ENCODE measurements at regions of chr3 and their contacts with region 1.

Region 1: DNA sequence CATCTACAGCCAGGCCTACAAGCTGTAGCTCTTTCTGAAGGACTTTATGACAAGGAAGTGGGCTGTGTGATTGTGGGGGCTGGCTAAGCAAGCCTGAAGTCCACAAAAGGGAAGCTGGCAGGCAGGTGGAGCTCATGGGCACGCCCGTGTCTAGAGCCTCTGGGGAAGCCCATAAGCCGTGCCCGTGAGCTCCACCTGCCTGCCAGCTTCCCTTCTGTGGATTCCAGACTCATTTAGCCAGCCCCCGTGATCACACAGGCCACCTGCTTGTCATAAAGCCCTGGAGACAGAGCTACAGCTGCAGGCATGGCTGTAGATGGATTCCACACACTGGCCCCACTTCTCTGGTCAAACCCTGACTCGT is 15.2 kb downstream of the EFCC1 start:
- DNase-seq: peak; percentile 88
- H3K4me3 Mint-ChIP-seq: peak overlapping the region; percentile 73
- H3K27ac Mint-ChIP-seq: peak overlapping the region; percentile 95
- H3K4me1 Mint-ChIP-seq: peaks cover 38% of the 10 kb centered on the region
- H3K27me3 Mint-ChIP-seq: no peaks in the 10 kb centered on the region

Region 2: GRCh38 chr3:128650096-128651050 is 366.0 kb before region 1 on chr3 and contains the start of gene RPN1:
- CTCF ChIA-PET with region 1: no interaction called
- intact Hi-C with region 1: loop called (anchors 5 kb)
- DNase-seq: peak; percentile 97
- H3K4me3 Mint-ChIP-seq: peak within 1 kb of the TSS; percentile 83
- H3K27ac Mint-ChIP-seq: peak within 1 kb of the TSS; percentile 88
- H3K4me1 Mint-ChIP-seq: peaks cover 30% of the 10 kb centered on the region
- H3K27me3 Mint-ChIP-seq: no peaks in the 10 kb centered on the region
- total RNA-seq, gene RPN1: 124 to 129 TPM

Region 3: DNA sequence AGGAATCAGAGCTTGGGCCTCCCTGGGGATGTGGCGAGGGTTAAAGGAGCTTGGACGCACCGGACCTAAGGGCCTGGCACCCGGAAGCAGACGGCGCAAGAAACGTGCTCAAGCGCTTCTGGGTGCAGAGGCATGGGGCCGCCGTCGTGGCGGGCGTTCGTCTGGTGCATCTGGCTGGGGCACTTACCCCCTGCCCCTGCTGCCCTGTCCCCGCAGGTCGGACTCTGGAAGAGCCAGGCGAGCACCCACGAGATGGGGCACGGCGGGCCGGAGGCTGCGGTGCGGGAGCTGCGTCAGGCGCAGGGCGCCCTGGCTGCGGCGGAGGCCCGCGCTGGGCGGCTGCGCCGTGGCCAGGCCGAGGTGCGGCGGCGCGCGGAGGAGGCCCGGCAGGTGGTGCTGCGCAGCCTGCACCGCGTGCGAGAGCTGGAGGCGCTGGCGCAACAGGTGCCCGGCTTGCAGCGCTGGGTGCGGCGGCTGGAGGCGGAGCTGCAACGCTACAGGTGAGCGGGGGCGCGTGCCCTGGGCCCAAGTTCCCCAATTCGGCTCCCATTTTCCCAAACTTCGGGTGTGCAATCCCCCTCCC is 12.7 kb before region 1 on chr3:
- CTCF ChIA-PET with region 1: interaction called, 74 read pairs
- intact Hi-C with region 1: loop called (anchors 1 kb)
- DNase-seq: peak; percentile 69
- H3K4me3 Mint-ChIP-seq: peak overlapping the region; percentile 53
- H3K27ac Mint-ChIP-seq: no peak overlapping the region
- H3K4me1 Mint-ChIP-seq: peaks cover 36% of the 10 kb centered on the region
- H3K27me3 Mint-ChIP-seq: peaks cover 21% of the 10 kb centered on the region